HEK293 (cell line): ENCODE measurements at regions of chr1 and their contacts with region 1.

Region 1: GRCh38 chr1:19333587-19334354 is 21.6 kb downstream of the SLC66A1 start:
- H3K4me3 ChIP-seq: no peak overlapping the region
- H3K27ac ChIP-seq: no peak overlapping the region
- H3K4me1 ChIP-seq: no peaks in the 10 kb centered on the region
- CTCF ChIP-seq: no peak

Region 2: GRCh38 chr1:19309123-19309813 is 24.5 kb before region 1 on chr1:
- CTCF ChIA-PET with region 1: no interaction called
- POLR2A ChIA-PET with region 1: no interaction called
- H3K4me3 ChIP-seq: no peak overlapping the region
- H3K27ac ChIP-seq: no peak overlapping the region
- H3K4me1 ChIP-seq: peaks cover 2% of the 10 kb centered on the region; the same call in 1 of the 2 replicates
- CTCF ChIP-seq: no peak

Region 3: GRCh38 chr1:19682257-19682656 is 348.5 kb after region 1 on chr1:
- CTCF ChIA-PET with region 1: no interaction called
- POLR2A ChIA-PET with region 1: interaction called, 13 read pairs
- H3K4me3 ChIP-seq: no peak overlapping the region
- H3K27ac ChIP-seq: no peak overlapping the region
- H3K4me1 ChIP-seq: no peaks in the 10 kb centered on the region
- CTCF ChIP-seq: no peak